ENCODE measurements at regions of chr6 and their contacts with region 1.

Region 1: GRCh38 chr6:142692942-142693341 is 252.0 kb downstream of the HIVEP2 start:
- DNase-seq: peak; percentile 70
- H3K4me3 ChIP-seq: no peak overlapping the region
- H3K27ac ChIP-seq: no peak overlapping the region
- H3K4me1 ChIP-seq: no peaks in the 10 kb centered on the region
- CTCF ChIP-seq: peak; percentile 98

Region 2: DNA sequence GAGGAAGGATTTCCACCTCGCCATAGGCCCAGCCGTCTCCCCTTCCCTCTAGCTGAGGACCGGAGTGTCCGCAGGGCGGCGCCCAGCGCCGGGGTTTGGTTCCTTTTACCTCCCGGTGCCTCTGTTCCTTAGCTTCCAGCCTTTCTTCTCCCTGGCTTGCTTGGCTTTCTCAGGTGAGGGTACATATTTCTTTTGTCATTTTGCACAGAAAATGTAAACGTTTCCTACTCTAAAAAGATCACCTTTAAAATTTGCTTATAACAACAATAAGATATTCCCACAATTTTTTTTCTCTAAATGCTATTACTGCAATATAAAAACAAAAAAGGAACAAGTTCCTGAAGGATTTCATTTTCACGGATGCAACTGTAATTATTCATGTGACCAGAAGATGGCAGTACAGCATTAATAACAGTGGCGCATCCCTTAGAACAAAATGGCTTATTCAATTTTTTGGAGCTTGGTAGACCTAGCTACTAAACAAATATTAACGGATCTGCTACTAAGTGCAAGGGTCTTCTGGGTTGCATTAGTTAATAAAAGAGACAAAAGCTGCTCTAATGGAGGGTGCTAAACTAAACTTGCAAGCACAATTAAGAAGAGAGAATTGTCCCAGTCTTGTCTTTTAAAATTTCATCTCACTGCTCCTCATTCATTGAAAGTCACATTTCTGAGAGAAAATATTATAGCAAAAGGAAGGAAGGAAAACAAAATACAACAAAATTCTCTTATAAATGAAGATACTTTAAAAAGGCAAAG is 218.2 kb before region 1 on chr6:
- CTCF ChIA-PET with region 1: no interaction called
- POLR2A ChIA-PET with region 1: no interaction called
- intact Hi-C with region 1: loop called (anchors 5 kb)
- DNase-seq: peak; percentile 47
- H3K4me3 ChIP-seq: no peak overlapping the region
- H3K27ac ChIP-seq: no peak overlapping the region
- H3K4me1 ChIP-seq: no peaks in the 10 kb centered on the region
- CTCF ChIP-seq: peak; percentile 96

Region 3: GRCh38 chr6:143026696-143027449 is 333.9 kb after region 1 on chr6:
- CTCF ChIA-PET with region 1: interaction called, 7 read pairs
- POLR2A ChIA-PET with region 1: no interaction called
- intact Hi-C with region 1: loop called (anchors 1 kb)
- DNase-seq: peak; percentile 56
- H3K4me3 ChIP-seq: no peak overlapping the region
- H3K27ac ChIP-seq: no peak overlapping the region
- H3K4me1 ChIP-seq: no peaks in the 10 kb centered on the region
- CTCF ChIP-seq: peak; percentile 92

Region 4: GRCh38 chr6:143279385-143279784 is 586.4 kb after region 1 on chr6:
- CTCF ChIA-PET with region 1: no interaction called
- POLR2A ChIA-PET with region 1: no interaction called
- intact Hi-C with region 1: loop called (anchors 1 kb)
- DNase-seq: peak; percentile 3
- H3K4me3 ChIP-seq: no peak overlapping the region
- H3K27ac ChIP-seq: no peak overlapping the region
- H3K4me1 ChIP-seq: no peaks in the 10 kb centered on the region
- CTCF ChIP-seq: peak; percentile 44; the same call in 1 of the 2 replicates

Region 5: GRCh38 chr6:143337201-143337949 is 644.4 kb after region 1 on chr6:
- CTCF ChIA-PET with region 1: no interaction called
- POLR2A ChIA-PET with region 1: no interaction called
- intact Hi-C with region 1: loop called (anchors 1 kb)
- DNase-seq: peak; percentile 47
- H3K4me3 ChIP-seq: no peak overlapping the region
- H3K27ac ChIP-seq: no peak overlapping the region
- H3K4me1 ChIP-seq: no peaks in the 10 kb centered on the region
- CTCF ChIP-seq: peak; percentile 80

Region 6: GRCh38 chr6:143427109-143427817 is 734.3 kb after region 1 on chr6:
- CTCF ChIA-PET with region 1: no interaction called
- POLR2A ChIA-PET with region 1: no interaction called
- intact Hi-C with region 1: loop called (anchors 2 kb)
- DNase-seq: peak; percentile 65
- H3K4me3 ChIP-seq: no peak overlapping the region
- H3K27ac ChIP-seq: no peak overlapping the region
- H3K4me1 ChIP-seq: no peaks in the 10 kb centered on the region
- CTCF ChIP-seq: peak; percentile 87

Region 7: GRCh38 chr6:143507358-143508145 is 814.6 kb after region 1 on chr6:
- CTCF ChIA-PET with region 1: no interaction called
- POLR2A ChIA-PET with region 1: no interaction called
- intact Hi-C with region 1: loop called (anchors 10 kb)
- DNase-seq: peak; percentile 32
- H3K4me3 ChIP-seq: no peak overlapping the region
- H3K27ac ChIP-seq: no peak overlapping the region
- H3K4me1 ChIP-seq: peaks cover 11% of the 10 kb centered on the region
- CTCF ChIP-seq: no peak